Heart right ventricle (tissue), 16 donors: ENCODE measurements at regions of chr1 and their contacts with region 1.

Region 1: DNA sequence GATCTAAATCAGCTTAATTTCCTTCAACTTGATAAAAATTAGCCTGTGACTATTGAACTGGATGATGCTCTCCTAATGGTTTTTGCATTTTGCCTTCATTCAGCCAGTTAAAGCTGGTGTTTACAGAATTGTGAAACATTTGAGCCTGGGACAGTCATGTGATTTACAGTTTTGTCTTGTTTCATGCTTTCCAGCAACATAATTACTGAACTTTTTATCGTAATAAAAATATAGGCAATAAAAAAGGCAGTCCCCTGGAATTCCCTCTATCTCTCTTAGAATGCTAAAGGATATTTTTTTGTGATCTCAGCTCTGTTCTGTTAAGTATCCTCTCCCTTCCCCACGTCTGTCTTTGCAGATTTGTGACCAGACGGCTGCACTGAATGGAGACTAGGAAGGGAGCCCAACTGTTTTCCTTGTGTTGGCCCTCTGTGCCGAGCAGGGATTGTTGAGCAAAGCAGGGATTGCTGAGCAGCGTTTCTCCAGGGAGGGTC is 70.3 kb upstream of the RGL1 start:
- DNase-seq: peak in 1 of 2 donors; percentile 66
- ATAC-seq: peak; percentile 62 to 93 (median 82)
- H3K4me3 ChIP-seq: no peak overlapping the region
- H3K27ac ChIP-seq: peak overlapping the region in 8 of 10 donors; percentile 4 to 65 (median 48)
- H3K4me1 ChIP-seq: peaks cover 8 to 83% (median 45%) of the 10 kb centered on the region in 9 donors
- H3K27me3 ChIP-seq: no peaks in the 10 kb centered on the region
- CTCF ChIP-seq: no peak

Region 2: GRCh38 chr1:183676586-183677189 is 57.9 kb before region 1 on chr1:
- intact Hi-C with region 1: loop called in 1 of 10 experiments (anchors 10 kb)
- DNase-seq: no peak
- ATAC-seq: peak in 2 of 8 donors; percentile 73 to 84
- H3K4me3 ChIP-seq: no peak overlapping the region
- H3K27ac ChIP-seq: no peak overlapping the region
- H3K4me1 ChIP-seq: peaks cover 0 to 34% (median 17%) of the 10 kb centered on the region in 9 donors
- H3K27me3 ChIP-seq: no peaks in the 10 kb centered on the region
- CTCF ChIP-seq: no peak

Region 3: GRCh38 chr1:183699616-183700160 is 34.9 kb before region 1 on chr1:
- intact Hi-C with region 1: no loop called
- DNase-seq: no peak
- ATAC-seq: no peak
- H3K4me3 ChIP-seq: no peak overlapping the region
- H3K27ac ChIP-seq: no peak overlapping the region
- H3K4me1 ChIP-seq: peaks cover 0 to 47% (median 24%) of the 10 kb centered on the region in 9 donors
- H3K27me3 ChIP-seq: no peaks in the 10 kb centered on the region
- CTCF ChIP-seq: no peak

Region 4: DNA sequence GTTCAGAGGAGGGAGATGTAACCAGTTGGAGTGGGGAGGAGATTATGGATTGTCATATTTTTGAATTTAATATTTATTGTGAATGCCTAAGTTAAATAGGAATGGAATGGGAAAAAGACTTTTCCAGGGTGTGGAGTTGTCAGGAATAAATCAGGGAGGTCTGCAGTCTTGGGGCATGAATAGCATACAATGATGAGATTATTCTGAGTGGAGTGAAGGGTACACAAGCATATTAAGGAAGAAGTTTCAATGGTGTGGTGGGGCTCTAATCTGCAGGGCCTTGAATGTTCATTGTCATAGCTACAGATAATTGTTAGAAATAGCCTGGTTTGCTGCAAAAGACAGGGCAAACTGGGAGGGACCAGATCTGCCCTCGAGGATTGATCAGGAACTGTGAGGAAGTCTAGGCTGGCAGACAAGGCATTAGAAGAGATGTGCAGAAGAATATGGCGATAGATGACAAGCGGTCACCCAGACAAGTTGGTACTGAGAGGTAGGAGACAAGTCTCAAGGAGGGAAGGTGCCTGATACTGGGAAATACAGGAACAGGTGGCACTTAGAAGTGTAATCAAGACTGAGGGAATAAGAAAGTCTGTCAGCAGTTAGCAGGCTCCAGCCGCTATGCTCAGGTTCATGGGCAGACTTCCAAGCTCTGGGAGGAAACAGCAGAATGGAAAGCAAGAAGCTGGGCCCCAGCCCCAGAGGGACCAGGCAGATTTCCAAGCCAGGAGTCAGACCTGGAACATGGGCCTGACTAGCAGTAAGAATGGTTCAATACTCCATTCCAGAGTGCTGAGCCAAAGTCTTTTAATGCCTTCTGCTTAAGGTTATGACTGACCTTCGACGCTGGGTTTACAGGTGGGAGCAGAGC is 49.4 kb after region 1 on chr1:
- intact Hi-C with region 1: loop called in 1 of 10 experiments (anchors 10 kb)
- DNase-seq: peak; percentile 66 to 84
- ATAC-seq: peak; percentile 66 to 90 (median 84)
- H3K4me3 ChIP-seq: no peak overlapping the region
- H3K27ac ChIP-seq: peak overlapping the region in 6 of 10 donors; percentile 11 to 60 (median 26)
- H3K4me1 ChIP-seq: peaks cover 5 to 39% (median 31%) of the 10 kb centered on the region in 9 donors
- H3K27me3 ChIP-seq: no peaks in the 10 kb centered on the region
- CTCF ChIP-seq: no peak

Region 5: DNA sequence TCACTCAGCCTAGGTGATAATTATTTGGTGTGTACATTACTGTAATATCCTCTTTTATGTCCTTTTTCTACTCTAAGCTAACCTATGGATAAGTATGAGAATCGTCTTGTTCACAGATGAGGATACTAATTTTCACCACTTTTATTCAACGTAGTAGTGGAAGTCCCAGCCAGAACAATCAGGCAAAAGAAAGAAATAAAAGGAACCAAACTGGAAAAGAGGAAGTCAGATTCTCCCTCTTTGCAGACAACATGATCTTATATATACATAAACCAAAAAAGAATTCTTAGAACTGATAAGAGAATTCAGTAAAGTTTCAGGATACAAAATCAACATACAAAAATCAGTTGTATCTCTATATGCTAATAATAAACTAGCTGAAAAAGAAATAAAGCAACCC is 57.7 kb after region 1 on chr1:
- intact Hi-C with region 1: loop called in 2 of 10 experiments (anchors 10 kb)
- DNase-seq: no peak
- ATAC-seq: no peak
- H3K4me3 ChIP-seq: no peak overlapping the region
- H3K27ac ChIP-seq: no peak overlapping the region
- H3K4me1 ChIP-seq: peaks cover 0 to 21% (median 0%) of the 10 kb centered on the region in 9 donors
- H3K27me3 ChIP-seq: no peaks in the 10 kb centered on the region
- CTCF ChIP-seq: no peak